Caco-2 (cell line): ENCODE measurements at regions of chr10 and their contacts with region 1.

Region 1: DNA sequence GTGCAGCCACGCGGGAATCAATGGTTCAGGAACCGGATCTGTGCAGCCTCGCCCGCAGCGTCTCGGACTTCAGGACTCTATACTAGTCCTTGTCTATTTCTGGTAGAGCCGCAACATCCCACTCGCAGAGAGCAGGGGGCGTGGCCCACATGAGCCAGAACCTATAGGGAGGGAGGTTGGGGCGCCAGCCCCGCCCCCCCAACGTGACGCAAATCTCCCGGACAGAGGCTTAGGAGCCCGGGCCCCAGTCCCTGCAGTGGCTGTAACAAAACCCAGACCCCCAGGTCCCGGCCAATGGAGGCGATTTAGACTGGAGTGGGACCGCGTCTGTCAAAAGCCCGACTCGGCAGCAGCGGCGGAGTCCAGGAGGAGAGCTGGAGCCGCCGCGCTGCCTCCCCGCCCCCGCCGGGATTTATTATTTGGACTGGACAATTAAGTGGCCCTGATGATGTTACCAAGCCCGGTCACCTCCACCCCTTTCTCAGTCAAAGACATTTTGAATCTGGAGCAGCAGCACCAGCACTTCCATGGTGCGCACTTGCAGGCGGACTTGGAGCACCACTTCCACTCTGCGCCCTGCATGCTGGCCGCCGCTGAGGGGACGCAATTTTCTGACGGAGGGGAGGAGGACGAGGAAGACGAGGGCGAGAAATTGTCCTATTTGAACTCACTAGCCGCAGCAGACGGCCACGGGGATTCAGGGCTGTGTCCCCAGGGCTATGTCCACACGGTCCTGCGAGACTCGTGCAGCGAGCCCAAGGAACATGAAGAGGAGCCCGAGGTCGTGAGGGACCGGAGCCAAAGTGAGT is at the start of gene NKX2-3:
- DNase-seq: peak; percentile 87 to 88
- H3K4me3 ChIP-seq: peak within 1 kb of the TSS; percentile 37
- H3K4me3 Mint-ChIP-seq: peak within 1 kb of the TSS; percentile 74
- H3K27ac Mint-ChIP-seq: no peak within 1 kb of the TSS
- H3K4me1 ChIP-seq: peaks cover 17% of the 10 kb centered on the region; the same call in 1 of the 2 replicates
- H3K4me1 Mint-ChIP-seq: peaks cover 8% of the 10 kb centered on the region
- H3K27me3 ChIP-seq: no peaks in the 10 kb centered on the region
- H3K27me3 Mint-ChIP-seq: no peaks in the 10 kb centered on the region
- CTCF ChIP-seq: no peak
- total RNA-seq, gene NKX2-3: 0.37 and 0.43 TPM in 2 replicates

Region 2: GRCh38 chr10:99520040-99520846 is 12.6 kb before region 1 on chr10:
- CTCF ChIA-PET with region 1: interaction called, 3 read pairs
- POLR2A ChIA-PET with region 1: no interaction called
- intact Hi-C with region 1: loop called (anchors 1 kb)
- DNase-seq: peak; percentile 27 to 52
- H3K4me3 ChIP-seq: peak overlapping the region; percentile 20; the same call in 1 of the 2 replicates
- H3K4me3 Mint-ChIP-seq: peak overlapping the region; percentile 70
- H3K27ac Mint-ChIP-seq: no peak overlapping the region
- H3K4me1 ChIP-seq: peaks cover 4% of the 10 kb centered on the region
- H3K4me1 Mint-ChIP-seq: peaks cover 17% of the 10 kb centered on the region
- H3K27me3 ChIP-seq: no peaks in the 10 kb centered on the region; the same call in 1 of the 2 replicates
- H3K27me3 Mint-ChIP-seq: peaks cover 19% of the 10 kb centered on the region
- CTCF ChIP-seq: no peak

Region 3: DNA sequence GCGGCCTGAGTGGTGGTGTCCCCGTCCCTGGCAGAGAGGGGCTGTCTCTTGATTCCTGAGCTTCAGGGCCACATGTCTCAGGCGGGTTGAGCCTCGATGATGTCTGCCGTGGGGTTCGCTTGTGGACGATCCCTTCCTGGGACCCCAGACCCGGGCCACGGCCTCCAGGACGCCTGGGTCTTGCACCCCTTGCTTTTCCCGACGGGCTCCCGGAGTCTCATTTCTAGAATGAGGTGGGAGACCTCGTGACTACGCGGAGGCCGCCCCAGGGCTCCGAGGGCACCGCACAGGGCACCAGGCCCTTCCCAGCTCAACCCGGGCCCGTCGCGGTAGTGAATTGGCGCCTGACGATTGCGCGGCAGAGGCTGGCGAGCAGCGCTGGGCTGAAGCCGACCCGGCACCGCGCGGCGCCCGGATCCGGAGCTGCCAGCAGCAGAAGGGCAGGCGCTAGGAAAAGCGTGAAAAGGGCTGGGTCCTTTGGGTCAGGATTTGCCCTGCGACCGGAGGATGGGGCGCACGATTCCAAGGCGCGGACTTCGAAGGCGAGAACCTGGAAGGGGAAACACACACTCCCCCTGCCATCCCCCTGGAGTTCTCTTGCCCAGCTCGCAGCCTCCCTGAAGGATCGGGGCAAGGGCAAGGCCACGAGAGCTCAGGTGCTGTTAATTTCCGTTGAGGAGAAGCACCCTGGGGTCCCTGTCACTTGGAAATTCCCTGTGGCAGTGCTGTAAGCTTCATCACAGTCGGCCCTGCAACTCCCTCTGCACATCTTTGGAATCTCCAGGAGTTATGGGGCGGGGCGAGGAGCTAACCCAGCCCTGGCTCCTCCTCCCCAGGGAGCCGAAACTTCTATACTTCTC is 1613.7 kb after region 1 on chr10:
- CTCF ChIA-PET with region 1: no interaction called
- POLR2A ChIA-PET with region 1: no interaction called
- intact Hi-C with region 1: no loop called
- DNase-seq: no peak
- H3K4me3 ChIP-seq: no peak overlapping the region
- H3K4me3 Mint-ChIP-seq: no peak overlapping the region
- H3K27ac Mint-ChIP-seq: no peak overlapping the region
- H3K4me1 ChIP-seq: peaks cover 8% of the 10 kb centered on the region
- H3K4me1 Mint-ChIP-seq: no peaks in the 10 kb centered on the region
- H3K27me3 ChIP-seq: no peaks in the 10 kb centered on the region
- H3K27me3 Mint-ChIP-seq: peaks cover 8% of the 10 kb centered on the region
- CTCF ChIP-seq: no peak